ENCODE measurements at regions of chr6 and their contacts with region 1.

Region 1: DNA sequence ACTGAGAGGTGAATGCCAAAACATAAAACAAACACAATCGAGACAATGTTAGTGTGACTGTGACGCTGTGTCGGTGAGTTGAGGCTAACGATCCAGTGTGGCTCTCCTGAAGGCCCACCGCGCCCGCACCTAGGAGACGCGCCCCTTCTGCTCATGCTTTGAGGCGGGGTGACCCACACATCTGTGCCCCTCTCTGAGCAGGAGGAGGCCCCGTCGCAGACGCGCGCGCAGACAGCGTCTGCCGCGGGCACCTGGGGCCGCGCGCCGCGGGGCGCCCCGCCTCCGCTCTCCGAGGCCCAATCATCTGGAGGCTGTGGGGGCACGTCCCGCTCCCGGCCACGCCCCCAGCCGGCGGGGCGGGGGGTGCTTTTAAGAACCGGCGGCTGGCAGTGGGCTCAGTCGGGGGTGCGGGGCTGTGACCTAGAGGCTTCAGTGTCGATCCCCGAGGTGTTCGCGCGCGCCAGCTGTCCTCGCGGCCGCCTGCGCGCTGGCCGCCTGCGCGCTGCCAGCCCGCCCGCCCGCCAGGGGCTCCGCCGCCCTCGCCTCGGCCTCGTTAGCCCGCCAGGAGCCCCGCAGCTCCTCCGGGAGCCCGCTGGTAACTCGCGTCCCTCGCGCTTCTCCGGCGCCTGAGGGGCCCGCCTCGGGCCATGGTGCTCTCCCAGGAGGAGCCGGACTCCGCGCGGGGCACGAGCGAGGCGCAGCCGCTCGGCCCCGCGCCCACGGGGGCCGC is at the start of gene SLC16A10:
- DNase-seq: peak; percentile 87
- ATAC-seq: peak; percentile 90
- H3K4me3 Mint-ChIP-seq: peak within 1 kb of the TSS; percentile 91
- H3K27ac Mint-ChIP-seq: peak within 1 kb of the TSS; percentile 90
- H3K4me1 Mint-ChIP-seq: peaks cover 37% of the 10 kb centered on the region
- H3K27me3 Mint-ChIP-seq: no peaks in the 10 kb centered on the region
- total RNA-seq, gene SLC16A10: 6.2 to 7.0 TPM

Region 2: GRCh38 chr6:110179401-110180227 is 907.7 kb before region 1 on chr6 and contains the start of gene WASF1:
- CTCF ChIA-PET with region 1: no interaction called
- POLR2A ChIA-PET with region 1: no interaction called
- intact Hi-C with region 1: loop called in 1 of 2 experiments (anchors 5 kb)
- DNase-seq: peak; percentile 94
- ATAC-seq: peak; percentile 89
- H3K4me3 Mint-ChIP-seq: no peak within 1 kb of the TSS
- H3K27ac Mint-ChIP-seq: peak within 1 kb of the TSS; percentile 7
- H3K4me1 Mint-ChIP-seq: peaks cover 5% of the 10 kb centered on the region
- H3K27me3 Mint-ChIP-seq: peaks cover 10% of the 10 kb centered on the region
- total RNA-seq, gene WASF1: 4.2 to 4.6 TPM

Region 3: DNA sequence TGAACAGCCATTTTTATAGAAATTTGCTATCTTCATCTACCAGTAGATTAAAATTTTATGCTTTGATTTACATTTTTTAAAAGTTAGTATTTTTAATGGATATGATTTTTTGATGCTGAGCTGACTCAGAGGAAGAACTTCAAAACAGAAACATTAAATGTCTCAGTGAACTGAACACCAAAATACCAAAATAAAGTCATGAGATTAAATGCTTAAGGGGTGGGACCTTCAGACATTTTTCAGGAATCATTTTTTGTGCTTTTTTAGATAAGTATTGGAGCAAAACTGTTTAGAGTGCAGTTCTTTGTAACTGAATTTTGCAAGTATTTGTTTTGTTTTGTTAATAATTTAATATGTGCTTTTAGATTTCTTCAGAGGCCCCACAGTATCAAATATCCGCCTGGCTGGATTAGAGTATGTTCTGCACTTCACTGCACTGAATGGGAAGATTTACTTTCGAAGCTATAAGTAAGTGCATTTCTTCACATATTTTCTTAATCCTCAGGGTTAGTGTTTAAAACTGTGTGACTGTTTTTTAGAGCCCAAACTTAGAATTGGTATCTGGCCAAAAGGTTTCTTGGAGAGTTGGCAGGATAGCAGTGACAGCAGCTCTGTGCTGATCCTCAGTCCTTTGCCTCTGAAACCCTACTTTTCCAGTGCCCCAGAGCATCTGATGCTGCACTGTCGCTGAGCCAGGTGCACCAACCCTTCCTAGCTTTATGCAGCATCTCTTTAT is 71.7 kb before region 1 on chr6:
- CTCF ChIA-PET with region 1: no interaction called
- POLR2A ChIA-PET with region 1: no interaction called
- intact Hi-C with region 1: no loop called
- DNase-seq: no peak
- ATAC-seq: no peak
- H3K4me3 Mint-ChIP-seq: no peak overlapping the region
- H3K27ac Mint-ChIP-seq: no peak overlapping the region
- H3K4me1 Mint-ChIP-seq: peaks cover 4% of the 10 kb centered on the region
- H3K27me3 Mint-ChIP-seq: no peaks in the 10 kb centered on the region

Region 4: DNA sequence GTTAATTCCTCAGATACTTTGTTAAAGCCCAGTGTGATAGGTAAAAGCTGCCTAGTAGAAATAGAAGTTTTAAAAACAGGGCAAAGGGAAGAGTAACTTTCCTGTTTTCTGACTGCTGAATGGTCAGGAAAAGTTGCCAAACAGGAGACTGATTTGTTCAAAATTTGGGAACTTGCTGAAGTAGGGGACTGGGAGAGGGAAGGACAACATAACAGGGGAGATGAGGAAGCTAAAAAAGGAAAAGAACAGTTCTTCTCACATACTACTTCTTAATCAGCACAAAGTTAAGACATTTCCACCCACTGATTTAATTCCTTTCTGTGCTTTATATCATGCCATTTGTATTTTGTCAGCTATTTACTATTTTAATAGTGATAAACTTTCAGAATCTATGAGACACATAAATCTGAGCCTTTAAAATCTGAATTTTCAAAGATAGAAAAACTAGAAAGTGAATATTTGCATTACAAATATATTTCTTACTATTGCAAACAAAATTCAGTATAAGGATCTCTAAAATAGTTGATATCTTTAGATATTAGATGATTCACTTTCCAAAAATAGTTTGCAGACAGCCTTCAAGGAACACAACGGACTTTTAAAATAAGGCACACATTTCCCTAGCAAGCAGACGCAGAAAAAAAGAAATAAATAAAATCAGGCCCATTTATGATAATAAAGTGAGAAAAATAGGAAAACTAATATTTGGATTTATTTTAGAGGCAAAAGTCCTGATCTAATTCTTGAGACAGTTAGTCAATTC is 36.8 kb before region 1 on chr6:
- CTCF ChIA-PET with region 1: no interaction called
- POLR2A ChIA-PET with region 1: no interaction called
- intact Hi-C with region 1: no loop called
- DNase-seq: no peak
- ATAC-seq: no peak
- H3K4me3 Mint-ChIP-seq: no peak overlapping the region
- H3K27ac Mint-ChIP-seq: no peak overlapping the region
- H3K4me1 Mint-ChIP-seq: no peaks in the 10 kb centered on the region
- H3K27me3 Mint-ChIP-seq: no peaks in the 10 kb centered on the region

Region 5: GRCh38 chr6:111113336-111114086 is 26.2 kb after region 1 on chr6:
- CTCF ChIA-PET with region 1: interaction called, 4 read pairs
- POLR2A ChIA-PET with region 1: interaction called, 3 read pairs
- intact Hi-C with region 1: loop called in 1 of 2 experiments (anchors 1 kb)
- DNase-seq: peak; percentile 77
- ATAC-seq: peak; percentile 96
- H3K4me3 Mint-ChIP-seq: peak overlapping the region; percentile 52
- H3K27ac Mint-ChIP-seq: peak overlapping the region; percentile 91
- H3K4me1 Mint-ChIP-seq: peaks cover 36% of the 10 kb centered on the region
- H3K27me3 Mint-ChIP-seq: no peaks in the 10 kb centered on the region

Region 6: DNA sequence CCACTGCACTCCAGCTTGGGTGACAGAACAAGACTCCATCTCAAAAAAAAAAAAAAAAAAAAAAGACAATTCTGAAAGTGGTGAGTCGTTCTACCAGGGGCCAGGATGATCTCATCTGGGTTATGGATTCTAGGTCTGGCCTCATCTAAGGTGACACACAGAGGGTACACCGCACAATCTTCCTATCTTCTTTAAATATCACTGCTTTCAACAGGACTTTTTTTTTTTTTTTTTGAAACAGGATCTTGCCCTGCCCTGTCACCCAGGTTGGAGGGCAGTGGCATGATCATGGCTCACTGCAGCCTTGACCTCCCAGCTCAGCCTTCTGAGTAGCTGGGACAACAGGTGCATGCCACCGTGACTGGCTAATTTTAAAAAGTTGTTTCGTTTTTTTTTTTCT is 67.7 kb after region 1 on chr6:
- CTCF ChIA-PET with region 1: no interaction called
- POLR2A ChIA-PET with region 1: no interaction called
- intact Hi-C with region 1: loop called (anchors 2 kb)
- DNase-seq: peak; percentile 56
- ATAC-seq: peak; percentile 97
- H3K4me3 Mint-ChIP-seq: no peak overlapping the region
- H3K27ac Mint-ChIP-seq: no peak overlapping the region
- H3K4me1 Mint-ChIP-seq: peaks cover 43% of the 10 kb centered on the region
- H3K27me3 Mint-ChIP-seq: no peaks in the 10 kb centered on the region

Region 7: GRCh38 chr6:111210194-111210728 is 123.0 kb after region 1 on chr6:
- CTCF ChIA-PET with region 1: no interaction called
- POLR2A ChIA-PET with region 1: no interaction called
- intact Hi-C with region 1: loop called in 1 of 2 experiments (anchors 1 kb)
- DNase-seq: peak; percentile 13
- ATAC-seq: peak; percentile 78
- H3K4me3 Mint-ChIP-seq: no peak overlapping the region
- H3K27ac Mint-ChIP-seq: no peak overlapping the region
- H3K4me1 Mint-ChIP-seq: no peaks in the 10 kb centered on the region
- H3K27me3 Mint-ChIP-seq: no peaks in the 10 kb centered on the region

Measured in activated CD4-positive, alpha-beta T cell treated with anti-CD3 and anti-CD28 coated beads for 36 hours (primary cell).